ENCODE measurements at regions of chr18 and their contacts with region 1.

Region 1: GRCh38 chr18:9708057-9708433 is at the start of gene RAB31:
- DNase-seq: peak; percentile 84 to 90 (median 86)
- H3K4me3 ChIP-seq: peak within 1 kb of the TSS; percentile 90
- H3K27ac ChIP-seq: peak within 1 kb of the TSS; percentile 86 to 96
- H3K4me1 ChIP-seq: peaks cover 10% of the 10 kb centered on the region
- H3K27me3 ChIP-seq: no peaks in the 10 kb centered on the region
- CTCF ChIP-seq: no peak
- EP300 ChIP-seq: no peak
- POLR2A ChIP-seq: peak; percentile 72
- total RNA-seq, gene RAB31: 37.9 to 188 (median 62.8) TPM

Region 2: GRCh38 chr18:9563331-9563730 is 144.7 kb before region 1 on chr18:
- intact Hi-C with region 1: no loop called
- DNase-seq: no peak
- H3K4me3 ChIP-seq: no peak overlapping the region
- H3K27ac ChIP-seq: no peak overlapping the region
- H3K4me1 ChIP-seq: peaks cover 10% of the 10 kb centered on the region
- H3K27me3 ChIP-seq: no peaks in the 10 kb centered on the region
- CTCF ChIP-seq: no peak
- EP300 ChIP-seq: no peak
- POLR2A ChIP-seq: no peak

Region 3: DNA sequence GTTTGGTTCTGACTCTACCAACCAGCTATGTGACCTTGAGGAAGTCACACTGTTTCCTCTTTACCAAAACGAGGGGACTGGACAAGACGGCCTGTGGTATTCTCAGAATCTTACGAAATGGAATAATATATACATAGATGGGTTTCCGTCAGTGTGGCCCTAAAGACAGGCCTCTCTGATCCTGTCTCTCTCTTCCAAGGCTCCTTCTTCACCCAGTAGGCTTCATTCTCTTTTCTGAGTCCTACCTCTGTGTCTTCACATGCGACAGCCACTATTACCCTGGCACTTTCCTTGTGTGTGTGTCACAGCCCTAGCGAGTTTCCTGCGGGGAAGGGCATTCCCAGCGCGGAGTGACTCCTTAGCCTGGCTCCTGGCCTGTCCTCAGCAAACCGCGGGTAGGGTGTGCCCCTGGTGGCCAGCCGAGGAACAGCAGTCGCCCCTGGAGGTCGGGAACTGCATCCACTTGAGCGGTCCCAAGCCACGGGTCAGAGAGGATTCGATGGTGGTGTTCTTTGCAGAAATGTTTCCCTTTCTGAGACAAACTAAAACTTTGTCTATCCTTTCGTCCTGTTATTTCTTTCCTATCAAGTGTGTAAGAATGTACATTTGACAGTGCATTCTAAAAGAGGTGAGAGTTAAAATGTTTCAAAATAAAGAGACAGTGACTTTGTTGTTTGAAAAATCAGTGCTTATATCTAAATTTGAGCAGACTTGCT is 63.4 kb after region 1 on chr18:
- intact Hi-C with region 1: loop called in 1 of 4 experiments (anchors 10 kb)
- DNase-seq: peak; percentile 57 to 86 (median 82)
- H3K4me3 ChIP-seq: no peak overlapping the region
- H3K27ac ChIP-seq: no peak overlapping the region
- H3K4me1 ChIP-seq: peaks cover 7% of the 10 kb centered on the region
- H3K27me3 ChIP-seq: no peaks in the 10 kb centered on the region
- CTCF ChIP-seq: peak; percentile 63 to 86 (median 85)
- EP300 ChIP-seq: no peak
- POLR2A ChIP-seq: no peak

Region 4: DNA sequence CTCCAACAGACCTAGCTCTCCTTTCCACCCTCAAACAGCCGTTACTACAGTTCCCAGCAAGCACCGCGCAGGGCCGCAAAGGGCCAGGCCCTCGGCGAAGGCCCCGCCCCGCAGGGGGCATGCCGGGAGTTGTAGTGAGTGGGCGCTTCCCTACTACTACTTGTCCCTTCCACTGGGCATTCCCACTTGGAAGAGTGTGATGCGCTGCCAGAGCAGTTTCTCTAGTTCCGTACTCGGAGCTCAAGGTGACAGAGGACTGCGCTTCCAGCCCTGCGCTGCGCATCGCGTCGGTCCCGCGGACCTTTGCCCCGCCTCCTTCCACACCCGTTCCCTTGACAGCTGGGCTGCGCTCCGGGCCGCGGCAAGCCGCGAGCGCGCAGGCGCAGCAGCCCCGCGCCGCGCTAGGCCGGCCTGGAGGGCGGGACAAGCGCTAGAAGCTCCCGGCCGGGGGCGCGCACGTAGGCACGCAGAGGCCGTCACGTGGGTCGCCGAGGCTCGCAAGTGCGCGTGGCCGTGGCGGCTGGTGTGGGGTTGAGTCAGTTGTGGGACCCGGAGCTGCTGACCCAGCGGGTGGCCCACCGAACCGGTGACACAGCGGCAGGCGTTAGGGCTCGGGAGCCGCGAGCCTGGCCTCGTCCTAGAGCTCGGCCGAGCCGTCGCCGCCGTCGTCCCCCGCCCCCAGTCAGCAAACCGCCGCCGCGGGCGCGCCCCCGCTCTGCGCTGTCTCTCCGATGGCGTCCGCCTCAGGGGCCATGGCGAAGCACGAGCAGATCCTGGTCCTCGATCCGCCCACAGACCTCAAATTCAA is 205.7 kb after region 1 on chr18 and contains the start of gene VAPA:
- intact Hi-C with region 1: loop called in 1 of 4 experiments (anchors 10 kb)
- DNase-seq: peak; percentile 94 to 97 (median 95)
- H3K4me3 ChIP-seq: peak within 1 kb of the TSS; percentile 67
- H3K27ac ChIP-seq: peak within 1 kb of the TSS; percentile 99 to 100
- H3K4me1 ChIP-seq: peaks cover 4% of the 10 kb centered on the region
- H3K27me3 ChIP-seq: no peaks in the 10 kb centered on the region
- CTCF ChIP-seq: no peak
- EP300 ChIP-seq: no peak
- POLR2A ChIP-seq: peak; percentile 99
- total RNA-seq, gene VAPA: 184 to 369 (median 254) TPM

Region 5: GRCh38 chr18:9925369-9925768 is 217.3 kb after region 1 on chr18:
- intact Hi-C with region 1: loop called in 1 of 4 experiments (anchors 10 kb)
- DNase-seq: no peak
- H3K4me3 ChIP-seq: no peak overlapping the region
- H3K27ac ChIP-seq: no peak overlapping the region
- H3K4me1 ChIP-seq: peaks cover 6% of the 10 kb centered on the region
- H3K27me3 ChIP-seq: no peaks in the 10 kb centered on the region
- CTCF ChIP-seq: no peak
- EP300 ChIP-seq: no peak
- POLR2A ChIP-seq: no peak

Region 6: DNA sequence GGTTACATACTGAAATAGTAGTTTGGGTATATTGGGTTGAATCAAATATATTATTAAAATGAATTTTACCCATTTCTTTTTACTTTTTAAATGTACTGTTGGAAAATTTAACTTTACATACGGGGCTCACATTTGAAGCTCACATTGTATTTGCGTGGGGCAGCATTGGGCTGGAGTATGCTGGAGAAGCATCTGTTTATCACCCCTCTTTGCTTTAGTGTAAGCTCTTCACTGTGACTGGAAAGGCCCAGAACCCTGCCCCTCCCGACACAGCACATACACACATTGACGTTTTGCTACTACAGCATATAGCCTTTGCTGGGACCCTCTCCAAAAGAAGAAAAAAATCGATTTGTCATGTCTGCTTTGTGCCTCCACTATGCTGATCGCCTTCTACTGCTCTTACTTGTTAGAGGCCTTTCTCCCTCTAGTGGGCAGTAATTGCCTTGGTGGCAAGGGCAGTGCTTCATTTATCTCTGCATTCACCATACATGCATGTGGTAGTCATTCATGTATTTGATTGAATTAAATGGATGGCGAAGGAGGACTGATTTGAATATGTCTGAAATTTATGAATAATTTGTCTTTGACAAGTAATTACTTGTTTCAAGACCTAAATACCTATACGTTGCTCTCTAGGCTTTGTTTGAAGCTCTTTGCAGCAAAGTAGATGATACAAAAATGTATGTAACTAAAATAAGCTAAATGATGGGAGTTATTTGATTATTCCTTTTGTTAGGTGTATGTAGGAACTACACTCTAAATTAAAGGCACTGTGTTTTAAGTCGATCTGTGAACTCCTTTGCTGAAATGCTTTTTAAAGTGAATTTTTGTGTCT is 243.2 kb after region 1 on chr18:
- intact Hi-C with region 1: loop called in 1 of 4 experiments (anchors 10 kb)
- DNase-seq: peak in 1 of 5 donors; percentile 37
- H3K4me3 ChIP-seq: no peak overlapping the region
- H3K27ac ChIP-seq: no peak overlapping the region
- H3K4me1 ChIP-seq: no peaks in the 10 kb centered on the region
- H3K27me3 ChIP-seq: no peaks in the 10 kb centered on the region
- CTCF ChIP-seq: peak in 1 of 3 donors; percentile 26
- EP300 ChIP-seq: no peak
- POLR2A ChIP-seq: no peak